Panc1 (cell line): ENCODE measurements at regions of chr17 and their contacts with region 1.

Region 1: GRCh38 chr17:16380640-16381495 is at the start of gene UBB:
- DNase-seq: peak; percentile 90
- ATAC-seq: peak; percentile 95
- H3K4me3 ChIP-seq: peak within 1 kb of the TSS; percentile 76 to 97
- H3K27ac ChIP-seq: peak within 1 kb of the TSS; percentile 98
- H3K4me1 ChIP-seq: peaks cover 29% of the 10 kb centered on the region
- H3K27me3 ChIP-seq: no peaks in the 10 kb centered on the region
- CTCF ChIP-seq: no peak
- total RNA-seq, gene UBB: 1,654 TPM

Region 2: DNA sequence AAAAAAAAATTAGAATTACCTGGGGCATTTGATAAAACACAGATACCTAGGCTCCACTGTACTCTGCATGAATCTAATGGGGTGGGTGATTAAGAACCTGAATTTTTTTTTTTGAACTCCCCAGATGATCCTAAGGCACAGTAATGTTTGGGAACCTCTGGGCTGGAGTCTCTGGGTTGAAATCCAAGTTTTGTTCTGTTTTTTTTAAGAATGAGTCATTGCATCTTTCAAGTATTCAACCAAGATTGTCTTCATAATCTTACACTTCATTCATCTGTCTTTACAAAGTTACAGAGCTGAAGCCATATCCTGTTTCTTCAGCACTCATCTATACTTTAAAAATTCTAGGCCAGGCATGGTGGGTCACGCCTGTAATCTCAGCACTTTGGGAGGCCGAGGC is 111.2 kb before region 1 on chr17:
- CTCF ChIA-PET with region 1: interaction called, 11 read pairs
- POLR2A ChIA-PET with region 1: no interaction called
- in situ Hi-C with region 1: no loop called
- intact Hi-C with region 1: no loop called
- DNase-seq: no peak
- ATAC-seq: no peak
- H3K4me3 ChIP-seq: no peak overlapping the region
- H3K27ac ChIP-seq: no peak overlapping the region
- H3K4me1 ChIP-seq: peaks cover 6% of the 10 kb centered on the region; the same call in 1 of the 2 replicates
- H3K27me3 ChIP-seq: no peaks in the 10 kb centered on the region
- CTCF ChIP-seq: no peak

Region 3: DNA sequence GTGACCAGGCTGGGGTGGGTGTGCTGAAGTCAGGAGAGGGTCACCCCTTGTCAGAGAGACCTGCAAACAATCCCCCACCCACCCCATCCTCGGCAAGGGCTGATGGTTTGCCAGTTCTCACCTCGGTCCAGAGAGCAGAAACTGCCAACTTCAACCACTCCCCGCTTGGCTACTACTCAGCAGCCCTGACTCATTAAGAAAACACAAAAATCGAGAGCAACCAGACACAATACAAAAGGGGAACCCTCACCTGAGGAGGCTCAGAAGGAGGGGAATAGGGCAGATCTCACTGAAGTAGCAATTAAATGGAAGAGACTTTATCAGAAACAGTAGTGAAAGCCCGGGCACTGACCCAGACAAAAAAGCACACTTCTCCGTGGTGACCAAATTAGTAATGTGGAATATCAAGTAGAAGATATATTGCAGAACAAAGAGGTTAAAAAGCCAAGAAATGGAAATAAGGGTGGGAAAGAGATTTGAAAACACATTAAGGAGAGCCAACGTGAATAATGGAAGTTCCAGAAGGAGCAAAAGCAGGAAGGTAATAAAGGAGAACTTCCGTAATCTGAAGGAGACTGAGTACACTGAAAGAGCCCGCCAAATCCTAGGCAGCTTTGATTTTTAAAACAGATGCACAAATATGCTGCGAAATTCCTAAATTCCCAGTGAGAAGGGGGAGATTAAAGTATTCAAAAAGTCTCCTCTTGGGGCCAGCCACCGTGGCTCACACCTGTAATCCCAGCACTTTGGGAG is 51.2 kb before region 1 on chr17:
- CTCF ChIA-PET with region 1: no interaction called
- POLR2A ChIA-PET with region 1: no interaction called
- in situ Hi-C with region 1: no loop called
- intact Hi-C with region 1: no loop called
- DNase-seq: no peak
- ATAC-seq: peak; percentile 78
- H3K4me3 ChIP-seq: peak overlapping the region in 1 of 2 experiments; percentile 4; a peak in 2 of 4 replicates
- H3K27ac ChIP-seq: peak overlapping the region; percentile 64
- H3K4me1 ChIP-seq: peaks cover 33% of the 10 kb centered on the region
- H3K27me3 ChIP-seq: no peaks in the 10 kb centered on the region
- CTCF ChIP-seq: no peak

Region 4: GRCh38 chr17:16363749-16364536 is 16.9 kb before region 1 on chr17:
- CTCF ChIA-PET with region 1: interaction called, 12 read pairs
- POLR2A ChIA-PET with region 1: interaction called, 3 read pairs
- in situ Hi-C with region 1: no loop called
- intact Hi-C with region 1: no loop called
- DNase-seq: no peak
- ATAC-seq: peak; percentile 96
- H3K4me3 ChIP-seq: no peak overlapping the region
- H3K27ac ChIP-seq: no peak overlapping the region; the same call in 1 of the 2 replicates
- H3K4me1 ChIP-seq: peaks cover 10% of the 10 kb centered on the region
- H3K27me3 ChIP-seq: no peaks in the 10 kb centered on the region
- CTCF ChIP-seq: peak; percentile 95

Region 5: DNA sequence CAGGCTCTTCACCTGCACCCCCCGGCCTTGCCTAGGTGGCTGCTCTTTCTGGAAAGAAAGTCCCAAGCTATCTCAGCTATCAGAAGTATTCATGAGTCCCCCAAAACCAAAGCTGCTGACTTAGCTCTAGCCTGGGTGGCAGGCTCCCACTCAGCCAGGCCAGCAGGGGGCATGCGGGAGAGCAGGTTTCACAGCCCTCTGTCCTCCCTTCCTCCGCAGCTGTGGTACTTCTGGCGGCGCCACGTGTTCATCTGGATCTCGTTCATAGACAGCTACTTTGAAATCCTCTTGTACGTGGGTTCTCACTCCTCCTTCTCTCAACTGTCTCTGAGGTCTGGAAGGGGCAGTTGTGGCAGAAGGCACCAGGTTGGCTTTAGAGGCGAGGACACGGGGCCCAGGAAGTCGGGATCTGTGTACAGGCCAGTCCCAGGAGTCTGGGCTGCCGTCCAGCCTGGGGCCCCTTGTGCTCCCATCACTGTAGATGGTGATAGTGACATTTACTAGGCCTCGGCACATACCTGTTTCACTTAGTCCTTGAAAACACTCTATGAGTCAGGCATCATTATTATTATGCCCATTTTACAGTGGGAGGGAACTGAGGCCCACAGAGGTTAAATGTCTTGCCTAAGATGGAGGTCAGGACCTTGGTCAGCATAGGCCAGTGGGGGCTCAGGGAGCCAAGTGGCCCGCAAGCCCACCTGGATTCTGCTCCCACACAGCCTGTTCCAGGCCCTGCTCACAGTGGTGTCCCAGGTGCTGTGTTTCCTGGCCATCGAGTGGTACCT is 47.4 kb after region 1 on chr17:
- CTCF ChIA-PET with region 1: interaction called, 10 read pairs
- POLR2A ChIA-PET with region 1: interaction called, 15 read pairs
- in situ Hi-C with region 1: no loop called
- intact Hi-C with region 1: loop called (anchors 10 kb)
- DNase-seq: no peak
- ATAC-seq: peak; percentile 80
- H3K4me3 ChIP-seq: no peak overlapping the region
- H3K27ac ChIP-seq: no peak overlapping the region
- H3K4me1 ChIP-seq: no peaks in the 10 kb centered on the region
- H3K27me3 ChIP-seq: no peaks in the 10 kb centered on the region
- CTCF ChIP-seq: peak; percentile 85; the same call in 1 of the 2 replicates

Region 6: DNA sequence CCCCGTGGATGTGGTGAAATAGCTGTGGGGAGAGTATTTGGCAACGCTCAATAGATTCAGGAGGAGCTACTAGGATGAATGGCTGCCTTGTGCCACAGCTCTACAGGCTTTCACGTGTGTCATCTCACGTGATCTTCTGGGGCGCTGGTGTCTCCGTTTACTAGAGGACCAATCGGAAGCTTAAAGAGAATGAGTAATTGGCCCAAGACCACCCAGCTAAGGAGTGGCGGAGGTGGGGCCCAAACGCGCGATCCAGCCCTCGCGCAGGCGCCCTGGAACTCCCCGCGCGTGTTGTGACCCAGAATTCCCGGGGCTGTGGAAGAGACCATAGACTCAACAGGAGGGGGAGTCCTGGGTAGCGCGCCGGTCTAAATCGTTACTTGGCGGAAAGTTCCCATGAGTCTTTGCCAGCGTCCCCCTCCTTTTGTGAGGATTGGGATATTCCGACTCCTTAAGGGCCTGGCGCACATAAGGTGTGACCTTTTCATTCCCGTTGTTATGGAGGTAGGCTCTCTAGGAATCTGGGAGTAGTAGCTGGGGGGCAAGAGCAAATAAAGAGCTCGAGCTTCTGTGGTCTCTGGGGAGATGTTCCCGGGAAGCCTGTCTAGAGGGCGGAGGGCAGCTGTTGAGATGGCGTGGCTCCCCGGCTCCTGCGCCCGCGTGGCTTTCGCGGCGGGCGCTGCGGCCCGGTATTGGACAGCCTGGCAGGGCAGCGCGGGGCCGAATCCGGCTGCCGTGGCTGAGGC is 57.9 kb after region 1 on chr17:
- CTCF ChIA-PET with region 1: no interaction called
- POLR2A ChIA-PET with region 1: interaction called, 5 read pairs
- in situ Hi-C with region 1: no loop called
- intact Hi-C with region 1: loop called (anchors 10 kb)
- DNase-seq: peak; percentile 98
- ATAC-seq: peak; percentile 90
- H3K4me3 ChIP-seq: peak overlapping the region; percentile 98 to 99
- H3K27ac ChIP-seq: peak overlapping the region; percentile 97
- H3K4me1 ChIP-seq: peaks cover 31% of the 10 kb centered on the region
- H3K27me3 ChIP-seq: no peaks in the 10 kb centered on the region
- CTCF ChIP-seq: no peak

Region 7: GRCh38 chr17:16447676-16448075 is 66.8 kb after region 1 on chr17:
- CTCF ChIA-PET with region 1: interaction called, 3 read pairs
- POLR2A ChIA-PET with region 1: interaction called, 10 read pairs
- in situ Hi-C with region 1: no loop called
- intact Hi-C with region 1: no loop called
- DNase-seq: no peak
- ATAC-seq: no peak
- H3K4me3 ChIP-seq: no peak overlapping the region
- H3K27ac ChIP-seq: no peak overlapping the region
- H3K4me1 ChIP-seq: peaks cover 9% of the 10 kb centered on the region
- H3K27me3 ChIP-seq: no peaks in the 10 kb centered on the region
- CTCF ChIP-seq: no peak